Activated CD4-positive, alpha-beta memory T cell treated with anti-CD3 and anti-CD28 coated beads for 36 hours (primary cell): ENCODE measurements at regions of chr11 and their contacts with region 1.

Region 1: GRCh38 chr11:96483374-96483955 is 93.7 kb downstream of the JRKL start:
- DNase-seq: no peak
- H3K4me3 Mint-ChIP-seq: no peak overlapping the region
- H3K27ac Mint-ChIP-seq: no peak overlapping the region
- H3K4me1 Mint-ChIP-seq: no peaks in the 10 kb centered on the region
- H3K27me3 Mint-ChIP-seq: peaks cover 8% of the 10 kb centered on the region

Region 2: DNA sequence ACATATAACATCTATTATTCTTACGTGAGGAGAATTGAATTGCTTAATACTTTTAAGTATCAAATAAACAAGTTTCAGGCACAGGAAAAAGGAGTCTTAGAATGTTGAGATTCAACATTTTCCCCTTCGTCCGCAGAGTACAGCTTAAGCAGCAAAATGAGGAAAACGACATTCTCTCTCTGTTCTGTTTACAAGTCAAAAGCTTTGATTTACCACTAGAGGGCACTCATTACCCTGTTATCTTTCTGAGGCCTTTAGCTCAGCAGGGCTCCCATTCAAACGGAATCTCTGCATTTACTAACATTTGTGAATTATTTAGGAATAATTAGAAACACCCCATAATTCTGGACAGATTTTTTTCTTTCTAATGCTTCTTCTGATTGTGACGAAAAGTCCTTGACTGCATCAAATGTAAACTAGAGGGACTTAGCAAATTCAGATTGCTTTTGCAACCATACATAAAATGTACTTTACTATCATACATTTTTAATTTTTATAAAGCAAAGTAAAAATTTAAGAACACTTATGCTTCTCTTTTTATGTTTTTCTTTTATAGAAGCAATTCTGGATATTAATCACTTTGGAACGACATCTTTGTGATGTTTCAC is 18.7 kb before region 1 on chr11:
- CTCF ChIA-PET with region 1: interaction called, 12 read pairs
- POLR2A ChIA-PET with region 1: no interaction called
- intact Hi-C with region 1: no loop called
- DNase-seq: no peak
- H3K4me3 Mint-ChIP-seq: no peak overlapping the region
- H3K27ac Mint-ChIP-seq: no peak overlapping the region
- H3K4me1 Mint-ChIP-seq: peaks cover 10% of the 10 kb centered on the region
- H3K27me3 Mint-ChIP-seq: no peaks in the 10 kb centered on the region